GM12878 (cell line): ENCODE measurements at regions of chr12 and their contacts with region 1.

Region 1: DNA sequence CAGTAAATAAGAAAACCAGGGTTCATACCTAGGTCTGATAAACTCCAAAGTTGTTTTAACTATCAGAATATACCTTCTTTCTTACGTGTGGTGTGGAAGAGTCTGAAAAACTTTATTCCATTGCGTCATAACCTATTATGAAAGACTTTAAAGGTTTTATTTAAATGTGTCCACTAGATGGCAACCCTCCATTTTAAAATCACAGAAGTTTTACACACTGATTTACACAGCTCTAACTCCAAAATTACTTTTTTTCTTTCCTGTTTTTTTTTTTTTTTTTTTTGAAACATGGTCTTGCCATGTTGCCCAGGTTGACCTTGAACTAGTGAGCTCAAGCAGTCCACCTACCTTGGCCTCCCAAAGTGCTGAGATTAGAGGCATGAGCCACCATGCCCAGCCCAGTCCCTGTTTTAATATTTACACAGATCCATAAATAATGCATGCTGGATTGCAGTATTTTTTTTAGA is 17.3 kb upstream of the TMPRSS12 start:
- DNase-seq: no peak
- ATAC-seq: peak; percentile 82
- H3K4me3 ChIP-seq: no peak overlapping the region
- H3K27ac ChIP-seq: no peak overlapping the region
- H3K4me1 ChIP-seq: no peaks in the 10 kb centered on the region
- H3K27me3 ChIP-seq: no peaks in the 10 kb centered on the region
- CTCF ChIP-seq: peak in 2 of 3 experiments; percentile 30 to 53; a peak in 3 of 6 replicates
- EP300 ChIP-seq: no peak
- POLR2A ChIP-seq: no peak
- RAD21 ChIP-seq: peak; percentile 68

Region 2: DNA sequence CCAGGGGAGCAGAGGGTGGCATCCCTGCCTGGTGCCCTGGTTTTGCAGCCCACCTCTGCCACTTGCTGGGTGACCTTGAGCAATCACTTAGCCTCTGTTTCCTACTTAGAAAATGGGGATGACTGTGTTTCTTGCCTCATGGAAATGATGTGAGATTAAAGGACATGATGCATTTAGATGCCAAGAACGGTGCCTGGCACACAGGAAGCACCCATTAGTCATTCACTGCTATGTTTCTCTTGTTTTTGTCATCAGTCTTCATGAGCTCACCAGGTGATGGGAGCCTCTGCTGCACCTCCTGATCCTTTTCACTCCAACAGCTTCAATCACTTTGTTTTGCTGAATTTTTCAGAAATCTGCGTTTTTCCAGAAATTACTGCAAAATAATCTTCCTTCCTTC is 85.1 kb before region 1 on chr12:
- CTCF ChIA-PET with region 1: no interaction called
- POLR2A ChIA-PET with region 1: no interaction called
- RAD21 ChIA-PET with region 1: no interaction called
- SMC1A ChIA-PET with region 1: no interaction called
- in situ Hi-C with region 1: no loop called
- intact Hi-C with region 1: no loop called
- DNase-seq: no peak
- ATAC-seq: no peak
- H3K4me3 ChIP-seq: no peak overlapping the region
- H3K27ac ChIP-seq: no peak overlapping the region
- H3K4me1 ChIP-seq: no peaks in the 10 kb centered on the region
- H3K27me3 ChIP-seq: no peaks in the 10 kb centered on the region
- CTCF ChIP-seq: no peak
- EP300 ChIP-seq: no peak
- POLR2A ChIP-seq: no peak
- RAD21 ChIP-seq: no peak

Region 3: DNA sequence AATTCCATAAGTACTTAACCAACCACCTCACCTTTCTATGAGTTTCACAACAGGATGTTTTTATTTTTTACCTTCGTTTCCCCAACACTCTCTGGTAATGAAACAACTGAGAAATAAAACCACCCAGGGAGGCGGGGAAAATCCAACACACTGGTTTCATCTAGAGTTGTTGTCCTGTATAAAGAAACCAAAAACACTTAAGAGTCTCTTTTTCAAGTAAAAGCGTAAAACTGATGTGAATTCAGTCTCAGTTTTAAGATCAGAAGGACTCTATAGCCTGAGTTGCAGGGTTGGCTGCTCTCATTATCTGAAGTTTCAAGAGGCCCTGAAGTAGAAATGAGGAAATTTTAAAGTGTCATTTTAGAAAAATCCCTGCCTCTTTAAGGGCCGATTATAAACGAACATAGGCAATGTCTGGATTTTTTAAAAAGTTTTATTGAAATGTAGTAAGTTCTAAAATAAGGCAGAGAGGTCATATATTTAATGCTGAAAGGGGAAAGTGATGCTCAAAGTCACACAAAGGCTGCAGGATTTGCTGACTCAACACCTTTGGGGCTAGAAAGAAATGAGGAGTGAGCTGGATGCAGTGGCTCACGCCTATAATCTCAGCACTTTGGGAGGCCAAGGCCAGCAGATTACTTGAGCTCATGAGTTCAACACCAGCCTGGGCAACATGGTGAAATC is 154.1 kb after region 1 on chr12:
- CTCF ChIA-PET with region 1: interaction called, 149 read pairs
- POLR2A ChIA-PET with region 1: no interaction called
- RAD21 ChIA-PET with region 1: interaction called, 114 read pairs
- SMC1A ChIA-PET with region 1: interaction called, 129 read pairs
- in situ Hi-C with region 1: no loop called
- intact Hi-C with region 1: no loop called
- DNase-seq: peak; percentile 39
- ATAC-seq: peak; percentile 93
- H3K4me3 ChIP-seq: no peak overlapping the region; the same call in 1 of the 2 replicates
- H3K27ac ChIP-seq: peak overlapping the region; percentile 23
- H3K4me1 ChIP-seq: peaks cover 12% of the 10 kb centered on the region
- H3K27me3 ChIP-seq: no peaks in the 10 kb centered on the region
- CTCF ChIP-seq: no peak
- EP300 ChIP-seq: 0 out of 4 replicates have a peak, but pooled peaks of 1 of the 2 experiments have one; percentile 21
- POLR2A ChIP-seq: no peak
- RAD21 ChIP-seq: 0 out of 2 replicates have a peak, but pooled peaks have one; percentile 0

Region 4: GRCh38 chr12:50986966-50987737 is 161.7 kb after region 1 on chr12:
- CTCF ChIA-PET with region 1: interaction called, 149 read pairs
- POLR2A ChIA-PET with region 1: no interaction called
- RAD21 ChIA-PET with region 1: interaction called, 114 read pairs
- SMC1A ChIA-PET with region 1: interaction called, 129 read pairs
- in situ Hi-C with region 1: loop called (anchors 5 kb)
- intact Hi-C with region 1: loop called (anchors 2 kb)
- DNase-seq: no peak
- ATAC-seq: peak; percentile 69
- H3K4me3 ChIP-seq: no peak overlapping the region
- H3K27ac ChIP-seq: no peak overlapping the region
- H3K4me1 ChIP-seq: peaks cover 17% of the 10 kb centered on the region
- H3K27me3 ChIP-seq: no peaks in the 10 kb centered on the region
- CTCF ChIP-seq: peak; percentile 45 to 68 (median 64); a peak in 5 of 6 replicates
- EP300 ChIP-seq: no peak
- POLR2A ChIP-seq: no peak
- RAD21 ChIP-seq: peak; percentile 77

Region 5: DNA sequence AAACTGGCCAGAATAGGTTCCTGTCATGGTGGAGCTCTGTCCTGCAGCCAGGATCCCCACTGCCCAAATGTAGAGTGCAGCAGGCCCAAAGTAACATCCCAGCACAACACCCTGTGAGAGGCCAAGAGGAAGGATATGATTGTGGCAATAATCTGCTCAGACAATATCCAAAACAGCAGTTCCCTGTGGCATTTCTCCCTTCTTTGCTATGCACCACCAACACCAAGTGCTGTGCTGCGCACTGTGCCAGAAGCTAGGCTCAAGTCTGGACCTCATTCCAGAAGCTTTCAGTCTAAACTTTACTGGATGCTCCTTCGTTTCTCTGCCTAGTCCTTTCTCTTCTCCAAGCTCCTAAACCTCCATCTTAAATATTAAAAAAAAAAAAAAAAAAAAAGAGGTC is 167.4 kb after region 1 on chr12:
- CTCF ChIA-PET with region 1: interaction called, 149 read pairs
- POLR2A ChIA-PET with region 1: no interaction called
- RAD21 ChIA-PET with region 1: interaction called, 114 read pairs
- SMC1A ChIA-PET with region 1: interaction called, 129 read pairs
- in situ Hi-C with region 1: loop called (anchors 5 kb)
- intact Hi-C with region 1: no loop called
- DNase-seq: no peak
- ATAC-seq: no peak
- H3K4me3 ChIP-seq: no peak overlapping the region
- H3K27ac ChIP-seq: no peak overlapping the region
- H3K4me1 ChIP-seq: peaks cover 14% of the 10 kb centered on the region
- H3K27me3 ChIP-seq: no peaks in the 10 kb centered on the region
- CTCF ChIP-seq: no peak
- EP300 ChIP-seq: no peak
- POLR2A ChIP-seq: no peak
- RAD21 ChIP-seq: no peak

Region 6: DNA sequence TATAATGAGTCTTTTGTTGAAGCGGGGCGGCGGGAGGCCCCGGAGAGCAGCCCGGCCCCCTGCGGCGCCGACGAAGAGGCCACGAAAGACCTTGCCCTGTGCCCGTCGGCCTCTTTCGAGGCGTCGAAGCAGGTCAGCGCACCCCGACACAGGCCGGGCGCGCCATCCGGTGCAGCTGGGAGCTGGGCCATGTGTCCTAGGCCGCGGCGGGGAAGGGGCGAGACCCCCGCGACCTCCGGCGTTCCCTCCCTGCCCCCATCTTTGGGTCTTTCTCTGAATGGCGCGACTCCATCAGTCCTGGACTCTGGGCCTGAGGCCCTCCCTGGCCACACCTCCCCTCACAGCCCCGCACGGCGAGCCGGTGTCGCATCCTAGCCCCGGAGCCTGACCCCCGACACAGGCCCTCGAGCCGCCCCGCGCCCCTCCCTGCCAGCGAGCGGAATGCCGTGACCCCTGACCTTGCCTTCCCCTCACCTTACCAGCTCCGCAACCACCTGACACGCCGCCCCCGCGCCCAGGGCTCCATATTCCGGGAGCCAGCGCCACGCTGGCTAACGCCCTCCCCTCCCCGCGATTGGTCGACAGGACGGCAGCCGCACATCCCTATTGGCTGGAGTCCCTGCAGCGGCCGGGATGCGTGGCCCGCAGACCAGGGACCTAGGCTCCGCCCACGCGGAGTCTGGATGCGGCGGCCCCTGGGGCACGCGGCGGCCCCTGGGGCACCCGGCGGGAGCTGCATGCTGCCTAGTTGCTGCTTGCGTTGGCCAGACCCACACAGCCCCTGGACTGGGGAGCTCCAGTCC is 200.6 kb after region 1 on chr12 and contains the start of gene SLC11A2:
- CTCF ChIA-PET with region 1: interaction called, 61 read pairs
- POLR2A ChIA-PET with region 1: interaction called, 3 read pairs
- RAD21 ChIA-PET with region 1: interaction called, 43 read pairs
- SMC1A ChIA-PET with region 1: interaction called, 31 read pairs
- in situ Hi-C with region 1: no loop called
- intact Hi-C with region 1: loop called (anchors 5 kb)
- DNase-seq: peak; percentile 72
- ATAC-seq: peak; percentile 97
- H3K4me3 ChIP-seq: peak within 1 kb of the TSS; percentile 71
- H3K27ac ChIP-seq: peak within 1 kb of the TSS; percentile 74
- H3K4me1 ChIP-seq: peaks cover 14% of the 10 kb centered on the region; the same call in 1 of the 2 replicates
- H3K27me3 ChIP-seq: no peaks in the 10 kb centered on the region; a peak in 1 of 4 replicates
- CTCF ChIP-seq: peak; percentile 7 to 13 (median 12); a peak in 2 of 6 replicates
- EP300 ChIP-seq: no peak
- POLR2A ChIP-seq: peak; percentile 83
- RAD21 ChIP-seq: no peak
- polyA plus RNA-seq, gene SLC11A2: 6.2 to 9.0 TPM

Region 7: DNA sequence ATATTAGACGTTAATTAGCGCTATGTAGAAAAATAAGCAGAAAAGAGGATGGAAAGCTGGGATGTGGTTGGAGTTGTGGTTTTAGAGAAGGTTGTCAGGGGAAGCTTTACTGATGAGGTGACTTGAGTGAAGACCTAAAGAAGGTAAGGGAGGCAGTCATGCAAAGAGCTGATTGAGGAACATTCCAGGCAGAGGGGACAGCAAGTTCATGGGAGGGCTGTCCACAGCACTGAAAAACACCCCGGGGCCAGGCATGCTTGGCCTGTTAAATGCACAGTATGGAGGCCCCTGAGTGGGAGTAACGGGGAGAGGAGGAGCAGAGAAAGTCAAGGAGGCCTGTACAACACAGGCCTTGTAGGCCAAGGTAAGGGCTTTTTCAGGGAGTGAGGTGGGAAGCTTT is 429.2 kb after region 1 on chr12:
- CTCF ChIA-PET with region 1: interaction called, 11 read pairs
- POLR2A ChIA-PET with region 1: no interaction called
- RAD21 ChIA-PET with region 1: no interaction called
- SMC1A ChIA-PET with region 1: interaction called, 6 read pairs
- in situ Hi-C with region 1: no loop called
- intact Hi-C with region 1: loop called (anchors 10 kb)
- DNase-seq: no peak
- ATAC-seq: no peak
- H3K4me3 ChIP-seq: no peak overlapping the region
- H3K27ac ChIP-seq: no peak overlapping the region
- H3K4me1 ChIP-seq: no peaks in the 10 kb centered on the region
- H3K27me3 ChIP-seq: no peaks in the 10 kb centered on the region
- CTCF ChIP-seq: no peak
- EP300 ChIP-seq: no peak
- POLR2A ChIP-seq: no peak
- RAD21 ChIP-seq: no peak

Region 8: DNA sequence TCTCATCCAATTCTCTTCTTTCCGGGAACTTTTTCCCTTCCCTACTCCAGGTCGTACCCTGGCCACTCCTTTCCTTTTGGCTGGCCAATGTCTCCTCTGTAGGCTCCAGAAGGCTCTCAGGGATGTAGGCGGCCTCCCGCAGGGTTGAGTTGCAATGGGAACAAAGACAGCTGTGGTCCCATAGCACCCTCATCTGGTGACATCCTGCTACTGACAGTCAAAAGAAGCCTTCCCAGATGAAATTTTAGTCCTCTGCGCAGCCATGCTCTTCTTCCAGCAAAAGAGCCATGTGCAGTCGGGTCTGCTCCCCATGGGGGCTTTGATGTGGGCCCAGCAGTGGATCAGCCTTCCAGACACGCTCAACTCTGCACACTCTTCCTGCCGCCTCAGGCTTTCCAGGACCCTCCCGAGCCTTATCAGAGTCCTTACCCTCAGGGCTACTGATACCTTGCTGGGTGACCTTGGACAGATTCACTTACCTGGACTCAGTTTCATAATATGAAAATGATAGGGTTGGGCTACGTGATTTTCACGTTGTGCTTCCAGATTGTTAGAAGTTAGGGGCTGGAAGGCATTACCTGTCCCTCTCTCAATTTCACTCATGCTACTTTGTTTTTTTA is 526.6 kb after region 1 on chr12:
- CTCF ChIA-PET with region 1: interaction called, 10 read pairs
- POLR2A ChIA-PET with region 1: no interaction called
- RAD21 ChIA-PET with region 1: no interaction called
- SMC1A ChIA-PET with region 1: no interaction called
- in situ Hi-C with region 1: no loop called
- intact Hi-C with region 1: no loop called
- DNase-seq: no peak
- ATAC-seq: peak; percentile 60; the same call in 2 of the 3 replicates
- H3K4me3 ChIP-seq: no peak overlapping the region
- H3K27ac ChIP-seq: no peak overlapping the region
- H3K4me1 ChIP-seq: peaks cover 3% of the 10 kb centered on the region
- H3K27me3 ChIP-seq: no peaks in the 10 kb centered on the region
- CTCF ChIP-seq: peak; percentile 50 to 64 (median 64); a peak in 5 of 6 replicates
- EP300 ChIP-seq: no peak
- POLR2A ChIP-seq: no peak
- RAD21 ChIP-seq: peak; percentile 66